ENCODE measurements at regions of chr11 and their contacts with region 1.

Region 1: DNA sequence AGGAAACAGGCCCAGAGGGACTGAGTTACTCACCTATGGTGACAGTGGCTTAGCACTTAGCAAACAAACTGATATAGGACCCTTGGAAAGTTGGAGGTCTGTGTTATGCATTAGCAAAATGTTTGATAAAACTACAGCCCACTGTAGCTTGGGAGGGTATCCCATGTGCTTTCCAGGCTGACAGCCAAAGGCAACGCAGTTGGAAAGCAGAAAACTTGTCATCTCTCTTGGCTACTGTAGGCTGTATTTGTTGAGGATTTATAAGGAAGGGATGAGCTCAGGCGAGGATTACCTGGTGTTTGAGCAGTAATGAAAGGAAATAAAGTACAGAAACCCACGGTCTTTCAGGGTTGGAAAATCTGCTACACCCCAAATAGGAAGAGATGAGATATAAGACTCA is 23.8 kb downstream of the SDHAF2 start:
- DNase-seq: no peak
- ATAC-seq: no peak
- H3K4me3 ChIP-seq: no peak overlapping the region
- H3K27ac ChIP-seq: no peak overlapping the region
- H3K4me1 ChIP-seq: peaks cover 9% of the 10 kb centered on the region
- H3K27me3 ChIP-seq: no peaks in the 10 kb centered on the region

Region 2: GRCh38 chr11:61509043-61510029 is 55.6 kb after region 1 on chr11:
- intact Hi-C with region 1: loop called in 2 of 4 experiments (anchors 10 kb)
- DNase-seq: peak; percentile 79 to 88 (median 88)
- ATAC-seq: peak; percentile 83 to 85
- H3K4me3 ChIP-seq: peak overlapping the region; percentile 6
- H3K27ac ChIP-seq: no peak overlapping the region
- H3K4me1 ChIP-seq: no peaks in the 10 kb centered on the region
- H3K27me3 ChIP-seq: no peaks in the 10 kb centered on the region

Region 3: GRCh38 chr11:61639816-61640443 is 186.2 kb after region 1 on chr11:
- intact Hi-C with region 1: loop called in 2 of 4 experiments (anchors 10 kb)
- DNase-seq: no peak
- ATAC-seq: no peak
- H3K4me3 ChIP-seq: no peak overlapping the region
- H3K27ac ChIP-seq: no peak overlapping the region
- H3K4me1 ChIP-seq: no peaks in the 10 kb centered on the region
- H3K27me3 ChIP-seq: no peaks in the 10 kb centered on the region